Activated naive CD4-positive, alpha-beta T cell treated with anti-CD3 and anti-CD28 coated beads for 36 hours (primary cell): ENCODE measurements at regions of chr19 and their contacts with region 1.

Region 1: DNA sequence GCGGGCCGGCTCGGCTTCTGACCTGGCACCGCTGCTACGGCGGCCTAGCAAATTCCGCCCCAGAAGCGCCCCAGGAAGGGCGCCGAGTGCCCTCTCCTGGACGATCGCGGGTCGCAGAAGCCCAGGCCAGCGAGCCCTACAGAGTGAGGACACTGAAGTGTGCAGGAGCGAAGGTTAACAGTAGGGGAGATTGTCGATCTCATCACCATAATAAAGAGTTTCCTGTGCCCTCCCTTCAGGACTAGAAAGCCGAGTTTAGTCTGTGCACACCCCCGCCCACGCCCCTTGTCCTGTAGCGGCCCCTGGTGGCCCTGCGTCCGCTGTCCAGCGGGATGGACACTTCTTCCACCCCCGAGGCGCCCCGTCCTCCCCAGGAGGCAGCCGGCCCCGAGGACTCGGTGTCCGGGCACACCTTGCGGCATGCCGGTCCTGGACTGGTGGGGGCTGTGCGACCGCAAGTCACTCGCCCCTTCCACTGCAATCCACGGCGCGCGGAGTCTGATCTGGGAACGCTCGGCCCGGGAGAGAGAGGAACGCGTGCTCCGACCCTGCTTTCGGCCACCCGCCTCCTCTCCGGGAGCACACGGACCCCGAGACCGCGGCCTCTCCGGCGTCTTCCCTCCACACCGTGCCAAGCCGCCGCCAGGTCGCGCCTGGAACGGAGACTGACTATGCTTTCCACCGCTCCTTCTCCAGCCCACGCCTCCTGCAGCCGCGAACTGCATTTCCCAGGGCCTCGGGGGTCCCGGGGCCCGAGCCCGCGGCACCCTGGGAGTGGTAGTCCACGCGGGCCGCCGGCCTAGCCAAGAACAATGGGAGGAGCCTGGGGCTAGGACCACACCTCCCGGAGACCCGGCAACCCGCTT is 769 bp upstream of the KMT2B start:
- DNase-seq: peak; percentile 96
- H3K4me3 Mint-ChIP-seq: peak overlapping the region; percentile 92
- H3K27ac Mint-ChIP-seq: peak overlapping the region; percentile 100
- H3K4me1 Mint-ChIP-seq: peaks cover 32% of the 10 kb centered on the region
- H3K27me3 Mint-ChIP-seq: no peaks in the 10 kb centered on the region

Region 2: GRCh38 chr19:35693830-35694599 is 23.0 kb before region 1 on chr19:
- CTCF ChIA-PET with region 1: interaction called, 120 read pairs
- intact Hi-C with region 1: loop called (anchors 1 kb)
- DNase-seq: peak; percentile 97
- H3K4me3 Mint-ChIP-seq: no peak overlapping the region
- H3K27ac Mint-ChIP-seq: peak overlapping the region; percentile 77
- H3K4me1 Mint-ChIP-seq: peaks cover 24% of the 10 kb centered on the region
- H3K27me3 Mint-ChIP-seq: no peaks in the 10 kb centered on the region

Region 3: GRCh38 chr19:35740423-35741202 is 23.6 kb after region 1 on chr19:
- CTCF ChIA-PET with region 1: interaction called, 3 read pairs
- intact Hi-C with region 1: loop called (anchors 1 kb)
- DNase-seq: peak; percentile 99
- H3K4me3 Mint-ChIP-seq: peak overlapping the region; percentile 89
- H3K27ac Mint-ChIP-seq: peak overlapping the region; percentile 97
- H3K4me1 Mint-ChIP-seq: peaks cover 41% of the 10 kb centered on the region
- H3K27me3 Mint-ChIP-seq: no peaks in the 10 kb centered on the region

Region 4: GRCh38 chr19:35757749-35758608 is 40.9 kb after region 1 on chr19 and contains the start of gene PROSER3:
- CTCF ChIA-PET with region 1: no interaction called
- intact Hi-C with region 1: loop called (anchors 1 kb)
- DNase-seq: peak; percentile 99
- H3K4me3 Mint-ChIP-seq: peak within 1 kb of the TSS; percentile 90
- H3K27ac Mint-ChIP-seq: peak within 1 kb of the TSS; percentile 92
- H3K4me1 Mint-ChIP-seq: peaks cover 20% of the 10 kb centered on the region
- H3K27me3 Mint-ChIP-seq: peaks cover 8% of the 10 kb centered on the region
- total RNA-seq, gene PROSER3: 45.3 to 47.4 TPM

Region 5: DNA sequence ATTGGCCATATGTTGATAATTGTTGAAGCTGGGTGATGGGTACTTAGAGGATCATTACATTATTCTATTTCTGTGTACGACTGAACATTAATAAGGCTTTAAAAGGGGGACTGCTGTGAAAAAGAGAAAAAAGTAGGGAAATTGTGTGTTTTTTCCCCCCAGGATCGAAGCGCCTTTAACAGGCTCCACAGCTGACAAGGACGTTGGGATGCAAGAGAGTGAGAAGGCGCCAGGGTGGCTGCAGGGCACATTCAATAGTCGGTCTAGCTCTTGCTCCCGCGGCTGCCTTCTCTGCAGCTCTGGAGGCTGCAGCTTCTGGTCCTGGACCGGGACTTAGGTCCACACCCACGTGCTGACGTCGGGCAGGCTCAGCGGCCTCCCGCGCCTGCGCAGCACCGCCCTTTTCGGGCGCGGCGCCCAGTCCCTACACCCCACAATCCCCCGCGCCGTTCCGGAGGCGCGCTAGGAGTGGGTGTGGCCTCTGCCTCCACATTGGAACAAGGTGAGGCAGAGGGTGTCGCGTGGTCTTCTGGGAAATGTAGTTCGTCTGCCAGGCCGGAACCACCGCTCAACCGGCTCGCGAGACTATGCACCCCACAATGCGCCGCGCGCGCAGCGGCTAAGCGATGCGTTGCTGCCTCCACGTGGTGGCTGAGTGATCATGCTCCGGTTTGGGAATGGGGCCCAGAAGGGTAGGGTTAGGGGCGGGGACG is 214.3 kb after region 1 on chr19:
- CTCF ChIA-PET with region 1: no interaction called
- intact Hi-C with region 1: loop called (anchors 1 kb)
- DNase-seq: peak; percentile 100
- H3K4me3 Mint-ChIP-seq: peak overlapping the region; percentile 81
- H3K27ac Mint-ChIP-seq: peak overlapping the region; percentile 93
- H3K4me1 Mint-ChIP-seq: peaks cover 32% of the 10 kb centered on the region
- H3K27me3 Mint-ChIP-seq: no peaks in the 10 kb centered on the region

Region 6: GRCh38 chr19:36054119-36054732 is 337.2 kb after region 1 on chr19 and contains the start of gene THAP8:
- CTCF ChIA-PET with region 1: no interaction called
- intact Hi-C with region 1: loop called (anchors 5 kb)
- DNase-seq: peak; percentile 100
- H3K4me3 Mint-ChIP-seq: peak within 1 kb of the TSS; percentile 94
- H3K27ac Mint-ChIP-seq: peak within 1 kb of the TSS; percentile 98
- H3K4me1 Mint-ChIP-seq: peaks cover 18% of the 10 kb centered on the region
- H3K27me3 Mint-ChIP-seq: no peaks in the 10 kb centered on the region
- total RNA-seq, gene THAP8: 1.1 to 1.2 TPM